Heart right ventricle (tissue), 16 donors: ENCODE measurements at regions of chr18 and their contacts with region 1.

Region 1: DNA sequence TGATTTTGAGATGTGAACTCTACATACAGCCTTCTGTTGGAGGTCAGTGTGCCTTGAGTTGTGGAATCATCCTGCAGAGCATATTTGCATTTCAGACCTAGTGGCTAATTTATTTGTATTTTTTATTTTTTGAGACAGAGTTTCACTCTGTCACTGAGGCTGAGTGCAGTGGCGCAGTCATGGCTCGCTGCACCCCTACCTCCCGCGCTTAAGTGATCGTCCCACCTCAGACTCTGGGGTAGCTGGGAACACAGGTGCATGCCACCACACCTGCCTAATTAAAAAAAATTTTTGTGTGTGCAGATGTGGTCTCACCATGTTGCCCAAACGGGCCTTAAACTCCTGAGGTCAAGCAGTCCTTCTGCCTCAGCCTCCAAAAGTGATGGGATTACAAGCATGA is 104.4 kb downstream of the ASXL3 start:
- DNase-seq: no peak
- ATAC-seq: no peak
- H3K4me3 ChIP-seq: no peak overlapping the region
- H3K27ac ChIP-seq: no peak overlapping the region
- H3K4me1 ChIP-seq: peaks cover 0 to 9% (median 0%) of the 10 kb centered on the region in 9 donors
- H3K27me3 ChIP-seq: no peaks in the 10 kb centered on the region
- CTCF ChIP-seq: no peak

Region 2: GRCh38 chr18:32868406-32868805 is 814.0 kb before region 1 on chr18:
- intact Hi-C with region 1: no loop called
- DNase-seq: no peak
- ATAC-seq: no peak
- H3K4me3 ChIP-seq: no peak overlapping the region
- H3K27ac ChIP-seq: no peak overlapping the region
- H3K4me1 ChIP-seq: no peaks in the 10 kb centered on the region
- H3K27me3 ChIP-seq: peaks cover 0 to 10% (median 0%) of the 10 kb centered on the region in 7 donors
- CTCF ChIP-seq: no peak

Region 3: DNA sequence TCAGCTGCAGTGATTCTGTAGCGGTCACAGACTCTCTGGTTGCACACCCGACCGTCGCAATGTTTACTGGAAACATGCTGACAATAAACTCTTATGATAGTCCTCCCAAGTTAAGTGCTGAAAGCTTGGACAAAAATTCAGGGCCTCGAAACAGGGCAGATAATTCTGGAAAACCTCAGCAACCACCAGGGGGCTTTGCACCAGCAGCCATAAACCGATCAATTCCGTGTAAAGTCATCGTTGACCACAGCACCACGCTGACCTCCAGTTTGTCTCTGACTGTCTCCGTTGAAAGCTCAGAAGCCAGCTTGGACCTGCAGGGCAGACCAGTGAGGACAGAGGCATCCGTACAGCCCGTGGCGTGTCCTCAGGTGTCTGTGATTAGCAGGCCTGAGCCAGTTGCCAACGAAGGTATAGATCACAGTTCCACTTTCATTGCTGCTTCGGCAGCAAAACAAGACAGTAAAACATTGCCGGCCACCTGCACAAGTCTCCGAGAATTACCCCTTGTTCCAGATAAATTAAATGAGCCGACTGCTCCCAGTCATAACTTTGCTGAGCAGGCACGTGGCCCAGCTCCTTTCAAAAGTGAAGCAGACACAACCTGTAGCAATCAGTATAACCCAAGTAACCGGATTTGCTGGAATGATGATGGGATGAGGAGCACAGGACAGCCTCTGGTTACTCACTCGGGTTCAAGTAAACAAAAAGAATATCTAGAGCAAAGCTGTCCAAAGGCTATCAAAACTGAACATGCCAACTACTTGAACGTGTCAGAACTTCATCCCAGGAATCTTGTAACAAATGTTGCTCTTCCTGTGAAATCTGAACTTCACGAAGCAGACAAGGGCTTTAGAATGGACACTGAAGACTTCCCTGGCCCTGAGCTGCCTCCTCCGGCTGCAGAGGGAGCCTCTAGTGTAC is 61.9 kb after region 1 on chr18:
- intact Hi-C with region 1: loop called in 1 of 10 experiments (anchors 10 kb)
- DNase-seq: no peak
- ATAC-seq: no peak
- H3K4me3 ChIP-seq: no peak overlapping the region
- H3K27ac ChIP-seq: no peak overlapping the region
- H3K4me1 ChIP-seq: no peaks in the 10 kb centered on the region
- H3K27me3 ChIP-seq: no peaks in the 10 kb centered on the region
- CTCF ChIP-seq: no peak